CD14-positive monocyte (primary cell): ENCODE measurements at regions of chr2 and their contacts with region 1.

Region 1: DNA sequence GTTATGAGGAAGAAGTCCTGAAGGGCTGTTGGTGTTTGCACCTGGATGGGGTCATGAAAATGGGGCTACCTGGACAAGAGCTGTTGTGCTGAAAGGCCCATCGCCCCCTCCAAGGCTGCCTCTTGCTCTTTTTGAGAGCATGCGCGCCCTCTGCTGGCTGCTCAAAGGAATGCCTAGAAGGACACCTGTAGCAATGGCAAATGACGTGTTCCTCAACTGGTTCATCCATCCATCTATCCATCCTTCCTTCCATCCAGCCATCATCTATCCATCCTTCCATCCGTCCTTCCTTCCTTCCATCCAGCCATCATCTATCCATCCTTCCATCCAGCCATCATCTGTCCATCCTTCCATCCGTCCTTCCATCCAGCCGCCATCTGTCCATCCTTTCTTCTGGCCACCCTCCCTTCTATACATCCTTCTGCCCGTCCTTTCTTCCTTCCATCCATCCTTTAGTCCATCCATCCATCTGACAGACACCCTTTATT is 17.2 kb upstream of the RPL31 start:
- DNase-seq: peak; percentile 49 to 70 (median 59)
- H3K4me3 ChIP-seq: no peak overlapping the region
- H3K4me3 Mint-ChIP-seq: peak overlapping the region in 1 of 2 donors; percentile 40
- H3K27ac ChIP-seq: no peak overlapping the region
- H3K27ac Mint-ChIP-seq: no peak overlapping the region
- H3K4me1 ChIP-seq: no peaks in the 10 kb centered on the region
- H3K4me1 Mint-ChIP-seq: no peaks in the 10 kb centered on the region
- H3K27me3 ChIP-seq: no peaks in the 10 kb centered on the region
- H3K27me3 Mint-ChIP-seq: peaks cover 3 to 7% (median 3%) of the 10 kb centered on the region in 3 donors
- CTCF ChIP-seq: peak; percentile 92

Region 2: DNA sequence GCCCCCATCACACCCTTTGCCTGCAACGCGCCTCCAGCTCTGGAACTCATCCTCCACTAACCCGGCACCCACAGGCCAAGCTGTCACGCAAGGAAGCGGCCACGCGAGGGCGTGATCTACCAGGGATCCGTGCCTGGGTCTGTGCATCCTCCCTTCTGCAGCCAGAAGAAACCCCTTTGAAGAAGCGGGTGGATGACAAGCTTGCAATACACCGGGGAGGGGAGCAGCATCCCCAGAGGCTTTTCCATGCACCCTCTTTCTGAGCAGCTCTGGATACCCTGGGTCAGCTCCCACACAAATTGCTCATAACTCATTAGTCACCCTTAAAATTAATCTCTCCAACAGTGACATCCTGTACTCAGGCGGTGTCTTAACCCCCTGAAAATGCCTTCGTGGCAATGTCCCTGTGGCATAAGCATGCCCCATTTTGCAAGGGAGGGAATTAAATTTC is 374.5 kb before region 1 on chr2:
- intact Hi-C with region 1: loop called (anchors 5 to 10 kb)
- DNase-seq: peak; percentile 14 to 23 (median 20)
- H3K4me3 ChIP-seq: no peak overlapping the region
- H3K4me3 Mint-ChIP-seq: no peak overlapping the region
- H3K27ac ChIP-seq: no peak overlapping the region
- H3K27ac Mint-ChIP-seq: no peak overlapping the region
- H3K4me1 ChIP-seq: no peaks in the 10 kb centered on the region
- H3K4me1 Mint-ChIP-seq: no peaks in the 10 kb centered on the region
- H3K27me3 ChIP-seq: no peaks in the 10 kb centered on the region
- H3K27me3 Mint-ChIP-seq: peaks cover 1 to 6% (median 2%) of the 10 kb centered on the region in 3 donors
- CTCF ChIP-seq: peak; percentile 47

Region 3: DNA sequence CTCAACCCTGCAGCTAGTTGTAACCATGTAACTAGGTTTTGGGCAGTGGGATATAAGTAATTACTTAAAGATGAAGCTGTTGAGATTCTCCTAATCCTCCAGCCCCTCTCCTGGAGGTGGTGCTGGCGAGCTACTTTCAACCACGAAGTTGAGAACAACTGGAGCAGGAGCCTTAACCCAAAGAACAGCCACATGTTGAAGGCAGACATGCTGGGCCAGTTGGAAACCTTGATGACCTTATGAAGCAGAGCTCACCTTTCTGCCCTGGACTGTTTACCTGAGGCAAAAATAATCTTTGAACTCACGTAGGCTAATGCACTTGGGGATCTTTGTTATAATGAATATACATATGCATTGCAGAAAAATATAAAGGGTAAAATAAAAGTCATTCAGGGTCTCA is 254.6 kb before region 1 on chr2:
- intact Hi-C with region 1: loop called in 1 of 2 experiments (anchors 5 kb)
- DNase-seq: peak in 1 of 3 donors; percentile 1
- H3K4me3 ChIP-seq: no peak overlapping the region
- H3K4me3 Mint-ChIP-seq: no peak overlapping the region
- H3K27ac ChIP-seq: no peak overlapping the region
- H3K27ac Mint-ChIP-seq: no peak overlapping the region
- H3K4me1 ChIP-seq: peaks cover 5 to 16% of the 10 kb centered on the region in 2 donors
- H3K4me1 Mint-ChIP-seq: peaks cover 11% of the 10 kb centered on the region
- H3K27me3 ChIP-seq: no peaks in the 10 kb centered on the region
- H3K27me3 Mint-ChIP-seq: peaks cover 2 to 14% (median 8%) of the 10 kb centered on the region in 3 donors
- CTCF ChIP-seq: peak; percentile 47